K562 (cell line): ENCODE measurements at regions of chr1 and their contacts with region 1.

Region 1: GRCh38 chr1:241611063-241611462 is 29.1 kb downstream of the CHML start:
- DNase-seq: peak; percentile 61 to 90 (median 70)
- ATAC-seq: peak; percentile 93
- H3K4me3 ChIP-seq: no peak overlapping the region
- H3K27ac ChIP-seq: no peak overlapping the region
- H3K4me1 ChIP-seq: peaks cover 7 to 24% of the 10 kb centered on the region in 2 experiments
- H3K27me3 ChIP-seq: no peaks in the 10 kb centered on the region
- CTCF ChIP-seq: peak; percentile 56 to 83 (median 68); a peak in 5 of 6 replicates
- EP300 ChIP-seq: peak; percentile 50
- POLR2A ChIP-seq: no peak
- RAD21 ChIP-seq: peak; percentile 91 to 97

Region 2: GRCh38 chr1:241413386-241413785 is 197.7 kb before region 1 on chr1:
- CTCF ChIA-PET with region 1: no interaction called
- POLR2A ChIA-PET with region 1: no interaction called
- in situ Hi-C with region 1: no loop called
- intact Hi-C with region 1: no loop called
- DNase-seq: no peak
- ATAC-seq: no peak
- H3K4me3 ChIP-seq: no peak overlapping the region
- H3K27ac ChIP-seq: no peak overlapping the region
- H3K4me1 ChIP-seq: no peaks in the 10 kb centered on the region
- H3K27me3 ChIP-seq: no peaks in the 10 kb centered on the region
- CTCF ChIP-seq: no peak
- EP300 ChIP-seq: no peak
- POLR2A ChIP-seq: no peak
- RAD21 ChIP-seq: no peak

Region 3: GRCh38 chr1:241531195-241532161 is 79.6 kb before region 1 on chr1:
- CTCF ChIA-PET with region 1: interaction called, 8 read pairs
- POLR2A ChIA-PET with region 1: no interaction called
- in situ Hi-C with region 1: no loop called
- intact Hi-C with region 1: loop called (anchors 1 kb)
- DNase-seq: peak; percentile 32 to 83 (median 51)
- ATAC-seq: peak; percentile 87
- H3K4me3 ChIP-seq: peak overlapping the region; percentile 31
- H3K27ac ChIP-seq: peak overlapping the region; percentile 48
- H3K4me1 ChIP-seq: peaks cover 0 to 4% of the 10 kb centered on the region in 2 experiments; a peak in 2 of 5 replicates
- H3K27me3 ChIP-seq: no peaks in the 10 kb centered on the region
- CTCF ChIP-seq: peak; percentile 55 to 91 (median 61)
- EP300 ChIP-seq: no peak; the same call in 1 of the 2 replicates
- POLR2A ChIP-seq: no peak
- RAD21 ChIP-seq: peak; percentile 95 to 97

Region 4: GRCh38 chr1:241666419-241666818 is 55.4 kb after region 1 on chr1:
- CTCF ChIA-PET with region 1: no interaction called
- POLR2A ChIA-PET with region 1: no interaction called
- in situ Hi-C with region 1: no loop called
- intact Hi-C with region 1: no loop called
- DNase-seq: no peak
- ATAC-seq: no peak
- H3K4me3 ChIP-seq: no peak overlapping the region
- H3K27ac ChIP-seq: no peak overlapping the region
- H3K4me1 ChIP-seq: no peaks in the 10 kb centered on the region; a peak in 2 of 5 replicates
- H3K27me3 ChIP-seq: no peaks in the 10 kb centered on the region
- CTCF ChIP-seq: no peak
- EP300 ChIP-seq: no peak
- POLR2A ChIP-seq: no peak
- RAD21 ChIP-seq: no peak

Region 5: GRCh38 chr1:241749901-241750695 is 139.0 kb after region 1 on chr1:
- CTCF ChIA-PET with region 1: no interaction called
- POLR2A ChIA-PET with region 1: no interaction called
- in situ Hi-C with region 1: no loop called
- intact Hi-C with region 1: no loop called
- DNase-seq: no peak
- ATAC-seq: peak; percentile 31
- H3K4me3 ChIP-seq: no peak overlapping the region
- H3K27ac ChIP-seq: no peak overlapping the region
- H3K4me1 ChIP-seq: no peaks in the 10 kb centered on the region; a peak in 1 of 5 replicates
- H3K27me3 ChIP-seq: no peaks in the 10 kb centered on the region
- CTCF ChIP-seq: no peak
- EP300 ChIP-seq: no peak
- POLR2A ChIP-seq: no peak
- RAD21 ChIP-seq: no peak

Region 6: DNA sequence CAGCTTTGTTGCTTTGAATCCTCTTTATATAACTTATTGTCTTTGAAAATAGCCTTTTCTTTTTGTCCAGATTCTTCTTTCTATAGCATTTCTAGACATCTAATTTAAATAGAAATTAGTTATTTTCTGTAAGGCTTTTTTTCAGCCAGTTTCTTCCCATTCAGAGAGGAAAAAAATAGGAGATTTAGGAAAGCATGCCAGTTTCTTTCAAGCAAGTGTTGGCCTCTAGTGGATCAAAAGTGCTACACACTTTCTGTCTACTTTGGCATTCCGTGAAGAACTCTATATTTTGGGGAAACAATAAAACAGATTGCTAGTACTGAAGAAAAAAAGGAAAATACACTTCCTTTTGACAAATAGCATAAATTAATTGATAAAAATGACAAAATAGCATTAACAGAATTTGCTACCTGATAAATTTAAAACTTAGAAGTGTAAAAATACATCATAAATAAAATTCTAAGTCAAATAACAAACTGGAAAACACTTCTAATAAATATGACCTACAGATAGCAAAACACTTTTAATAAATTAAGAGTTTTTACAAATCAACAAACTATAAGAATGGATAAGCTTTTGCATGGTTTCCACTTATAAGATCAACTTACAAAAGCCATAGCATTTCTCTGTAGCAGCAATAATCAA is 223.8 kb after region 1 on chr1:
- CTCF ChIA-PET with region 1: interaction called, 25 read pairs
- POLR2A ChIA-PET with region 1: interaction called, 3 read pairs
- in situ Hi-C with region 1: loop called (anchors 5 kb)
- intact Hi-C with region 1: loop called (anchors 1 kb)
- DNase-seq: peak in 2 of 4 experiments; percentile 45 to 77
- ATAC-seq: peak; percentile 80
- H3K4me3 ChIP-seq: no peak overlapping the region
- H3K27ac ChIP-seq: no peak overlapping the region
- H3K4me1 ChIP-seq: peaks cover 6 to 19% of the 10 kb centered on the region in 2 experiments; a peak in 4 of 5 replicates
- H3K27me3 ChIP-seq: no peaks in the 10 kb centered on the region
- CTCF ChIP-seq: peak; percentile 65 to 89 (median 76); a peak in 5 of 6 replicates
- EP300 ChIP-seq: no peak
- POLR2A ChIP-seq: no peak
- RAD21 ChIP-seq: peak; percentile 92 to 93

Region 7: DNA sequence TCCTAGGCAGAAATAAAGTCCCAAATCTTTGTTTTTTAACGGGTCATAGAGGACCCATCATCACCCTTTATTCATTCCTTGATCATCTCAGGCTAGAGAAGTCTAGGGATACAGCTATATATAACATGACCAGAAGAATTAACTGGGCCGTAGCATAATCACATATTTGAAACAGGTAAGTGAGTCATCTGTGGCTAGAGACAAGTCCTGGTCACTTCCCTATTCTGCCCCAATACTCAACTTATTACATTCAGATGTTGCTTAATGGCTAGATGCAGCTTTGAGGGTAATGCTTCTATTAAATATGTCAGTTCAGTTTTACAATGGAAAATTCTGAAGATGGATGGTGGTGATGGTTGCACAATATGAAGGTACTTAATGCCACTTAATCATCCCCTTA is 283.9 kb after region 1 on chr1:
- CTCF ChIA-PET with region 1: interaction called, 7 read pairs
- POLR2A ChIA-PET with region 1: interaction called, 4 read pairs
- in situ Hi-C with region 1: no loop called
- intact Hi-C with region 1: loop called (anchors 2 kb)
- DNase-seq: no peak
- ATAC-seq: no peak
- H3K4me3 ChIP-seq: no peak overlapping the region
- H3K27ac ChIP-seq: no peak overlapping the region
- H3K4me1 ChIP-seq: no peaks in the 10 kb centered on the region
- H3K27me3 ChIP-seq: no peaks in the 10 kb centered on the region
- CTCF ChIP-seq: no peak
- EP300 ChIP-seq: no peak
- POLR2A ChIP-seq: no peak
- RAD21 ChIP-seq: no peak

Region 8: DNA sequence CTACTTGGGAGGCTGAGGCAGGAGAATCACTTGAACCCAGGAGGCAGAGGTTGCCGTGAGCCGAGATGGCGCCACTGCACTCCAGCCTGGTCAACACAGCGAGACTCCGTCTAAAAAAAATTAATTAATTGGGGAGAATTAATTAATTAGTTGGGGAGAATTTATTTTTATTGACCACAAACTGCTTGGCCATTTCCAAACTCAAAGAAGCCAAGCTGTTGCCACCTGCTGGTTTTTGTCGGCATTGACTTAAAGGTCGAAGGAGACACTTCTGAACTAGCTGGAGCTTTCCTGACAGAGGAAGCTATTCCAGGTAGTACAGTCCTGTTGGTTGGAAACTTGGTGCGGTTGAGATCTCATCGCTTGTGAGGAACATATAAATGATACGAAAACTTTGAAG is 374.7 kb after region 1 on chr1:
- CTCF ChIA-PET with region 1: no interaction called
- POLR2A ChIA-PET with region 1: no interaction called
- in situ Hi-C with region 1: loop called (anchors 25 kb)
- intact Hi-C with region 1: loop called (anchors 2 kb)
- DNase-seq: peak; percentile 42 to 70 (median 50)
- ATAC-seq: peak; percentile 82
- H3K4me3 ChIP-seq: no peak overlapping the region
- H3K27ac ChIP-seq: no peak overlapping the region
- H3K4me1 ChIP-seq: no peaks in the 10 kb centered on the region; a peak in 1 of 5 replicates
- H3K27me3 ChIP-seq: peaks cover 20 to 25% of the 10 kb centered on the region in 2 experiments
- CTCF ChIP-seq: peak; percentile 58 to 75 (median 65)
- EP300 ChIP-seq: no peak
- POLR2A ChIP-seq: no peak
- RAD21 ChIP-seq: peak; percentile 48 to 72; a peak in 3 of 4 replicates

Region 9: DNA sequence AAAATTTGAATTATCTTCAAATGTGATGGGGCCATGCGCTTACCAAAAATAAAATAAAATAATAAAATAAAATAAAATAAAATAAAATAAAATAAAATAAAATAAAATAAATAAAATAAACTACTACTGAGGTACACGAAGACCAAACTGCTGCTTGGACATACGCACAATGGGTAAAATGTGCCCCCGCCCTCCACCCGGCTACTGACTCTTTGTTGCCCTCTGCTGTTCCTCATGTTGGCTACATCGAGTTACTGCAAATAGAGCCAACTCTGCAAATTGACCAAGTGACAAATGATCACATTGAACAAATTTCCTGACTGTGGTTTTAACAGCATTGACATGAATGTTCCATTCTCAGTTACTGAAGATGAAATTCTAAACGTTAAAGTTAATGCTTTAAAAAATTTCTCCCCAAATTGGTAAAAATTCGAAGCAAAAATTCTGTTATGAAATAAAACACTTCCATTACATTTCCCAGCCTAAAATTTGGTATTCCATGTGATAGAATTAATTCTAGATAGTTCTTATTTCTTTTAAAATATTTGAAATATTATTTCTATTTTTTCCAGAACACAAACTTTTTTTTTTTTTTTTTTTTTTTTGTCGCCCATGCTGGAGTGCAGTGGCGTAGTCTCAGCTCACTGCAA is 406.6 kb after region 1 on chr1:
- CTCF ChIA-PET with region 1: interaction called, 4 read pairs
- POLR2A ChIA-PET with region 1: no interaction called
- in situ Hi-C with region 1: no loop called
- intact Hi-C with region 1: loop called (anchors 1 kb)
- DNase-seq: peak; percentile 80 to 83 (median 81)
- ATAC-seq: peak; percentile 92
- H3K4me3 ChIP-seq: no peak overlapping the region
- H3K27ac ChIP-seq: no peak overlapping the region
- H3K4me1 ChIP-seq: no peaks in the 10 kb centered on the region
- H3K27me3 ChIP-seq: peaks cover 0 to 10% of the 10 kb centered on the region in 2 experiments; a peak in 2 of 5 replicates
- CTCF ChIP-seq: peak; percentile 80 to 91 (median 89)
- EP300 ChIP-seq: no peak
- POLR2A ChIP-seq: no peak
- RAD21 ChIP-seq: peak; percentile 56 to 81

Region 10: DNA sequence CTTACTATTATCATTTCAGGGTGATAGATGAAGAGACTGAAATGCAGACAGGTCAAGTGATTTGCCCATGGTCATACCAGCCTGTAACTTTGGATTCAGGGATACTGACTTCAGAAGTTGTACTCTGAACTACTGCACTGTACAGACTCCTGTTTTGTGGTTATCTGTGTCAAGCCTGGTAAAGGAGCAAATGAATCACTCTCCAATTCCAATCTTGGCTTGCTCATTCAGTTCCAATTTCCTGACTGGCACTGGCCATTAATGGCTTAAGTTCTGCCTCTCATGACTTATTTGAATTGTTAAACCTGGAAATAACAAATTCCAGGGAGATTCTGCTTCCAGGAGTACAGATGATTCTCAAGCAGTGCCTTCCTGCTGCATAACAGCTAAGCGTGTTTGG is 958.8 kb after region 1 on chr1:
- CTCF ChIA-PET with region 1: no interaction called
- POLR2A ChIA-PET with region 1: no interaction called
- in situ Hi-C with region 1: no loop called
- intact Hi-C with region 1: no loop called
- DNase-seq: no peak
- ATAC-seq: no peak
- H3K4me3 ChIP-seq: no peak overlapping the region
- H3K27ac ChIP-seq: no peak overlapping the region
- H3K4me1 ChIP-seq: no peaks in the 10 kb centered on the region
- H3K27me3 ChIP-seq: no peaks in the 10 kb centered on the region
- CTCF ChIP-seq: no peak
- EP300 ChIP-seq: no peak
- POLR2A ChIP-seq: no peak
- RAD21 ChIP-seq: no peak